MCF 10A (cell line): ENCODE measurements at regions of chr1 and their contacts with region 1.

Region 1: DNA sequence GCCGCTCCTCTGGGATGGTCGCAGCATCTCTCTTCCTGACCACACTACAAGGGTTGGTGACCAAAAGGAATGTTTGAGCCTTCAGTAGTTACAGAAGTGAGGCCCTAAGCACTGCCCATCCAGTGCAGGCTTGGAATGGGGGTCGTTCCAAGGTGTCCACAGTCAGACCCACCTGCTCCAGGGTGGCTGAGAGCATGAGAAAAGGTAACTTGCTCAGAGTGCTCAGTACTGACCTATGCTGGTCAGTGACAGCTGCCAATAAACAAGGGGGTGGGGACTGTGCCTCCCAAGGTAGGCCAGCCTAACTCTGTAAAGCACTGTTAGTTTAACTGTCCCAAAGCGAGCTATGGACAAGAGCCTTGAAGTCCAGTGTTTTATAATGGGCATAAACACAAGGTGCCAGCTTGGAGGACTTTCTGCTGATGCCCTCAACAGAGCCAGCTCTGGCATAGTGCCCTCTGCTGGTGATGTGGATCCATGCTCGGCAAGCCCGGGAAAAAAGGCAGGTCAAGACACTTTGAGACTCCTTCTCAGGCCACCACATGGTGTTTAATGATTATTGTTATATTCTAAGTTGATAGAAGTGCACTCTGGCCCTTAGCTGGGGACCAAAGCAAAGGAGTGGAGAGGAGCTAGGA is 78.1 kb upstream of the DNAH14 start:
- DNase-seq: peak; percentile 85
- H3K4me3 Mint-ChIP-seq: no peak overlapping the region
- H3K27ac Mint-ChIP-seq: no peak overlapping the region
- H3K4me1 Mint-ChIP-seq: peaks cover 6% of the 10 kb centered on the region
- H3K27me3 Mint-ChIP-seq: peaks cover 9% of the 10 kb centered on the region
- CTCF ChIP-seq: peak; percentile 98

Region 2: GRCh38 chr1:224521904-224522734 is 329.2 kb before region 1 on chr1:
- CTCF ChIA-PET with region 1: interaction called, 624 read pairs
- POLR2A ChIA-PET with region 1: interaction called, 3 read pairs
- intact Hi-C with region 1: no loop called
- DNase-seq: no peak
- H3K4me3 Mint-ChIP-seq: no peak overlapping the region
- H3K27ac Mint-ChIP-seq: no peak overlapping the region
- H3K4me1 Mint-ChIP-seq: peaks cover 8% of the 10 kb centered on the region
- H3K27me3 Mint-ChIP-seq: no peaks in the 10 kb centered on the region
- CTCF ChIP-seq: peak; percentile 7

Region 3: GRCh38 chr1:224637515-224637914 is 213.8 kb before region 1 on chr1:
- CTCF ChIA-PET with region 1: interaction called, 278 read pairs
- POLR2A ChIA-PET with region 1: interaction called, 3 read pairs
- intact Hi-C with region 1: loop called (anchors 2 kb)
- DNase-seq: peak; percentile 92
- H3K4me3 Mint-ChIP-seq: no peak overlapping the region
- H3K27ac Mint-ChIP-seq: no peak overlapping the region
- H3K4me1 Mint-ChIP-seq: peaks cover 30% of the 10 kb centered on the region
- H3K27me3 Mint-ChIP-seq: peaks cover 27% of the 10 kb centered on the region
- CTCF ChIP-seq: no peak

Region 4: GRCh38 chr1:224711876-224712275 is 139.5 kb before region 1 on chr1:
- CTCF ChIA-PET with region 1: interaction called, 15 read pairs
- POLR2A ChIA-PET with region 1: no interaction called
- intact Hi-C with region 1: no loop called
- DNase-seq: no peak
- H3K4me3 Mint-ChIP-seq: no peak overlapping the region
- H3K27ac Mint-ChIP-seq: no peak overlapping the region
- H3K4me1 Mint-ChIP-seq: peaks cover 11% of the 10 kb centered on the region
- H3K27me3 Mint-ChIP-seq: peaks cover 10% of the 10 kb centered on the region
- CTCF ChIP-seq: no peak

Region 5: GRCh38 chr1:224804220-224804619 is 47.1 kb before region 1 on chr1:
- CTCF ChIA-PET with region 1: interaction called, 17 read pairs
- POLR2A ChIA-PET with region 1: interaction called, 3 read pairs
- intact Hi-C with region 1: no loop called
- DNase-seq: no peak
- H3K4me3 Mint-ChIP-seq: no peak overlapping the region
- H3K27ac Mint-ChIP-seq: no peak overlapping the region
- H3K4me1 Mint-ChIP-seq: no peaks in the 10 kb centered on the region
- H3K27me3 Mint-ChIP-seq: no peaks in the 10 kb centered on the region
- CTCF ChIP-seq: no peak

Region 6: DNA sequence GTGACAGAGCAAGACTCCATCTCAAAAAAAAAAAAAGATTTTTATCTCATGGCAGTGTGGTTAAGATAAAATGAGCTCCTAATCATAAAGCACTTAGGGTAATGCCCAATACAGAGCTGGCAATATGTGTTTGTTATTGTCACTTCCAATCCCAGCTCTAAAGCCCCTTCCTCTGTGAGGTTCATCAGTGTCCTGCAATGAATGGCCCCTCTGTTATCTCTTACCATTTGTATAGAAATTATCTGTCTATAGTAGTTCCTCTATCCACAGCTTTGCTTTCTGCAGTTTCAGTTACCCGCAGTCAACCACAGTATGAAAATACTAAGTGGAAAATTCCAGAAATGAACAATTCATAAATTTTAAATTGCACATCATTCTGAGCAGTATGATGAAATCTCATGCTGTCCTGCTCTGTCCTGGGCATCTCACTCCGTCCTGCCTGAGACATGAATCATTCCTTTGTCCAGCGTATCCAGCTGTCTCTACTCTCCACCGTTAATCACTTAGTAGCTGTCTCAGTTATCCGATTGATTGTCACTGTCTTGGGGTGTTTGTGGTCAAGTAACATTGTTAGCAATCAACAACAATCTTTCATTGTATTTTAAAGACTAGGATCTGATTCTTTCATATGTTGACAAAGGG is 28.0 kb after region 1 on chr1:
- CTCF ChIA-PET with region 1: interaction called, 64 read pairs
- POLR2A ChIA-PET with region 1: interaction called, 4 read pairs
- intact Hi-C with region 1: no loop called
- DNase-seq: peak; percentile 68
- H3K4me3 Mint-ChIP-seq: no peak overlapping the region
- H3K27ac Mint-ChIP-seq: no peak overlapping the region
- H3K4me1 Mint-ChIP-seq: peaks cover 31% of the 10 kb centered on the region
- H3K27me3 Mint-ChIP-seq: peaks cover 13% of the 10 kb centered on the region
- CTCF ChIP-seq: no peak